ENCODE measurements at regions of chr10 and their contacts with region 1.

Region 1: DNA sequence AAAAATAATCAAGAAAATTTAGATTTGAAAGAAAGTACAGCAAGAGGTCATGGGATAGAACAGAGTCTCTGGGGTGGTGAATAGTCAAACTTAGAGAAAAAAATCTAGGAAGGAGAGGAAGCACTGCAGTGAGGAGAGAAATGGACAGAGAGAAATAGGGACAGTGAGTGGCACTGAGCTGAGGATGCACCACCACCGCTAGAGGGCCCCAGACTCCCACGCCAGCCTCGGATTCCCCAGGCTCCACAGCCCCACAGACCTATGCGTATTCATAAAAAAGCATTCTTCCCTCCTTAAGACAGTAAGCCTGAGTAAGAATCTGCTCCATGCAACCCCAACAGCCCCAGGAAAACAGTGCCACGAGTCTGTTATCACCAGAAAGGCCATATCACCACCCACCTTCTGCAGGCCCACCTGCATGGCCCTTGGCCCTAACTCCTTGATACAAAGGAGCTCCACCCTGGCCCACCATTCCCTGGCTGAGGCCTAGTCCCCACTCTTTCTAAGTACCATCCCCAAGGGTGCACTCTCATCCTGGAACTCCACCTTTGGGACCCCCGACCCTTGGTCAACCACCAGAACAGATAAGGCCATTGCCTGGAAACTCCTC is 91.0 kb downstream of the ALOX5 start:
- DNase-seq: peak; percentile 79 to 93 (median 82)
- H3K4me3 ChIP-seq: no peak overlapping the region
- H3K27ac ChIP-seq: no peak overlapping the region
- H3K4me1 ChIP-seq: peaks cover 20 to 25% of the 10 kb centered on the region in 2 donors
- H3K27me3 ChIP-seq: no peaks in the 10 kb centered on the region
- CTCF ChIP-seq: peak; percentile 88 to 96 (median 94)
- POLR2A ChIP-seq: no peak

Region 2: GRCh38 chr10:45249978-45250693 is 214.9 kb before region 1 on chr10:
- intact Hi-C with region 1: loop called in 1 of 2 experiments (anchors 5 kb)
- DNase-seq: peak in 5 of 7 donors; percentile 17 to 54 (median 30)
- H3K4me3 ChIP-seq: no peak overlapping the region
- H3K27ac ChIP-seq: no peak overlapping the region
- H3K4me1 ChIP-seq: no peaks in the 10 kb centered on the region
- H3K27me3 ChIP-seq: no peaks in the 10 kb centered on the region
- CTCF ChIP-seq: peak; percentile 54 to 75 (median 61)
- POLR2A ChIP-seq: no peak

Region 3: GRCh38 chr10:45594276-45595106 is 129.4 kb after region 1 on chr10:
- intact Hi-C with region 1: loop called in 1 of 2 experiments (anchors 10 kb)
- DNase-seq: peak; percentile 94 to 96 (median 95)
- H3K4me3 ChIP-seq: peak overlapping the region in 3 of 4 donors; percentile 30 to 95 (median 71)
- H3K27ac ChIP-seq: peak overlapping the region in 4 of 5 donors; percentile 32 to 92 (median 78)
- H3K4me1 ChIP-seq: peaks cover 9 to 30% of the 10 kb centered on the region in 2 donors
- H3K27me3 ChIP-seq: no peaks in the 10 kb centered on the region
- CTCF ChIP-seq: no peak
- POLR2A ChIP-seq: peak; percentile 34 to 79

Region 4: GRCh38 chr10:45672181-45673073 is 207.4 kb after region 1 on chr10 and contains the start of gene ZFAND4:
- intact Hi-C with region 1: loop called (anchors 5 kb)
- DNase-seq: peak; percentile 97 to 99 (median 99)
- H3K4me3 ChIP-seq: peak within 1 kb of the TSS; percentile 47 to 77 (median 65)
- H3K27ac ChIP-seq: peak within 1 kb of the TSS; percentile 56 to 92 (median 90)
- H3K4me1 ChIP-seq: peaks cover 0 to 6% of the 10 kb centered on the region in 2 donors
- H3K27me3 ChIP-seq: no peaks in the 10 kb centered on the region
- CTCF ChIP-seq: peak; percentile 8 to 96 (median 65)
- POLR2A ChIP-seq: peak; percentile 67 to 82
- total RNA-seq, gene ZFAND4: 11.0 to 48.7 (median 31.4) TPM